CD4-positive, alpha-beta memory T cell (primary cell): ENCODE measurements at regions of chr3 and their contacts with region 1.

Region 1: DNA sequence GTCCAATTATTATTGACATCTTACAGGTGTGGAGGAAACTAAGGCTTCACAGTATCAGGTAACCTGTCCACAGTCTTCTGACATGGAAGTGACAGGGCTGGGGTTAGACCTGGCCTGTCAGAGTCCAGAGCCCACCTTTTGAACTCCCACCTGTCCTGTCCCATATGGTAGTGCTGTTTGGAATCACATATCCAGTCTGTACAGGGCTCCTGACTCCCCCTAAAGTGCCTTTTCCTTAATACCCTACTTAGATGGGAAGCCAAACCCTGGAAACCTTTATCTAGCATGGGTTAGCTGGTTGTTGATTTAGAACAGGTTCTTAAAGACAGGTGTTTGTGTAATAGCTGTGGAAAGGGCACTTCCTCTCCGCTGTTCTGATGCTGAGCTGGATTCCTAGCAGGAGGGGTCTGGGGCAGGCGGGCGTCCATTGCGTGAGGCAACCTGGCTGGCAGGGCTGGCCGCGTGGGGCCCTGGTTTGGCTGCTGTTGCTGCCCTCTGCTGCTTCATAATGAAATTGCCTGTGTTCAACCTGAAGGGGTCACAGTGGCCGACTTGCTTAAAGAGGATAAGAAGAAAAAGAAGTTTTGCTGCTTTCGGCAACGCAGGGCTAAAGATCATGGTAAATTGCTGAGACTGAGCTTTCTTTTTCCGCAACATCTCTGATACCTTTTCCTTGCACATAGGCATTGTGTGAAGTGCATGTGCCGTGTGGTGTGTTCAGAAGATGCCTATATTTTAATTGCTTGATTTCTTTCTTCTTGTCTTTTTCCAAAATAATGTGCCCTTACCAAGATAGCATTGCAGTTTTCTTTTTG is 136.2 kb downstream of the CHDH start:
- DNase-seq: peak; percentile 29 to 53 (median 41)
- H3K4me3 ChIP-seq: no peak overlapping the region
- H3K4me3 Mint-ChIP-seq: no peak overlapping the region
- H3K27ac ChIP-seq: no peak overlapping the region
- H3K27ac Mint-ChIP-seq: no peak overlapping the region
- H3K4me1 ChIP-seq: peaks cover 4% of the 10 kb centered on the region
- H3K4me1 Mint-ChIP-seq: peaks cover 0 to 5% (median under 1%) of the 10 kb centered on the region in 4 donors
- H3K27me3 ChIP-seq: no peaks in the 10 kb centered on the region
- H3K27me3 Mint-ChIP-seq: no peaks in the 10 kb centered on the region

Region 2: DNA sequence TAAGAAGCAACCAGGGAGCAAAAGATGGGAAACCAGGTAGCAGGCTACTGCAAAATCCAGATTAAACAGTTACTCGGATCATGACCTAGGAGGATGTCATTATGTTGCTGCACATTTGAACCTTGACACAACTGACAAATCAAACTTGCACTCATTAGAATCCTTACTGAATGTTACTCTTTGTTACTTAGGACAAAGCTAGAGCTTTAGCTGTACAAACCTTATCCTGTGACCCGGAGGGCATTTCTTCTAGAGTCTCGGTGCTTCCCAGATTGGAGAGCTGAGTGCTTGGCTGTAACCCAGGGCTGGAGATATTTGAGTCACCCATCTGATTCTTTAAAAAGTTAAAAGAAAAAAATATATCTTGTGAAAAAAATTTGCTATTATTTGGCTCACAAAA is 406.1 kb before region 1 on chr3:
- CTCF ChIA-PET with region 1: interaction called, 16 read pairs
- POLR2A ChIA-PET with region 1: no interaction called
- intact Hi-C with region 1: no loop called
- DNase-seq: no peak
- H3K4me3 ChIP-seq: no peak overlapping the region
- H3K4me3 Mint-ChIP-seq: no peak overlapping the region
- H3K27ac ChIP-seq: no peak overlapping the region
- H3K27ac Mint-ChIP-seq: peak overlapping the region in 3 of 7 donors; percentile 25 to 79 (median 53)
- H3K4me1 ChIP-seq: no peaks in the 10 kb centered on the region
- H3K4me1 Mint-ChIP-seq: peaks cover 0 to 4% (median 2%) of the 10 kb centered on the region in 4 donors
- H3K27me3 ChIP-seq: no peaks in the 10 kb centered on the region
- H3K27me3 Mint-ChIP-seq: no peaks in the 10 kb centered on the region

Region 3: DNA sequence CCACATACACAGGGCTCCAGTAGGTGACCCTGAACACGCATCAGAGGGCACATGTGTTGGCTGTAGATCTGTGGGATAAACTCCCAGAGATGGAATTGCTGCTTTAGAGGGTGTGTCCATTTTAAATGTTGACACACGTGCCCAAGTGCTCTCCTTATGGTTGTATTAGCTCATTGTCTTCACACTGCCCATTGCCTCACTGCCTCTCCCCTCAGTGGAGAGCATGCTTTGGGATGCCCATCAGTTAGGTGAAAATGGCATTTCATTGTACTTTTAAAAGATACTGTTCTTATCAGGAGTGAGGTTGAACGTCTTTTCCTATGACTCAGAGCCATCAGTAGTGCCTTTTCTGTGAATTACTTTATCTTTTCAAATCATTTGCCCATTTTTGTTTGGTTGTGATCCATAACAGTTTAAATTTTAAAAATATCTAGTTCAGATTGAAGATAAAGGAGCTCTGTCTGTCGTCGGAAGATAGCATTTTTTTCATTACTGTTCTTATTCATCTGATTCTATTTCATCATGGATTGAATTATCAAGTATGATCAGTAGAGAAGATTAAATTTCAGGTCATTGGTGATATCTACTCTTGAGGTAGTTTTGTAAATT is 15.4 kb after region 1 on chr3:
- CTCF ChIA-PET with region 1: interaction called, 13 read pairs
- POLR2A ChIA-PET with region 1: no interaction called
- intact Hi-C with region 1: no loop called
- DNase-seq: no peak
- H3K4me3 ChIP-seq: no peak overlapping the region
- H3K4me3 Mint-ChIP-seq: no peak overlapping the region
- H3K27ac ChIP-seq: no peak overlapping the region
- H3K27ac Mint-ChIP-seq: no peak overlapping the region
- H3K4me1 ChIP-seq: no peaks in the 10 kb centered on the region
- H3K4me1 Mint-ChIP-seq: no peaks in the 10 kb centered on the region
- H3K27me3 ChIP-seq: no peaks in the 10 kb centered on the region
- H3K27me3 Mint-ChIP-seq: peaks cover 9 to 23% of the 10 kb centered on the region in 2 donors

Region 4: DNA sequence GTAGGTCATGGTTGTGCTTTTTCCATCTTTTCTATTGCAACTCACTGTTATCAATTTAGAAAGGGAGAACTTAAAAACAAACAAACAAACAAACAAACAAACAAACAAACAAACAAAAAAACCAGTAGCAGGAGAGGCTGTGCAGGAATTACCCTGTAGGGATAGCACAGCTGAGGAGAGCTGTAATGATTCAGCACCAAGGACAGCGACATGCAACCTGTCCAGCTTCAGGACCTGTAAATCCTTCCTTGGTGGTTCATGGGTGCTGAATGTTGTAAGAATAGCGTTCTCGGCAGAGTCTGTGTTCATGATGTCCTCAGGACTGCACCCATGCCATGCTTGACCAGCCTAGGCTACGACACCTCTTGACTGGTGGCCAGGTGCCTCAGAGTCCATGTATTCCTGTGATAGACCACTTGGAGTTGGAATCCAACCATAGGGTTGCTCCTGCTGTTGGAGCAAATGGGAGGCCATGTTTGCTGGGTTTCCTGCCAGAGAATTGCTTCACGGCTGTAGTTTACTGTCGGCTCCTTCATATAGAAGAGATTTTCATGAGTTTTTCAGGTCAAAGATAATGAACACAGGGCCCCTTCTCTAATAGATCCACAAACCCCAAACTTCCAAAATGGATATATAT is 478.2 kb after region 1 on chr3:
- CTCF ChIA-PET with region 1: no interaction called
- POLR2A ChIA-PET with region 1: no interaction called
- intact Hi-C with region 1: no loop called
- DNase-seq: peak in 4 of 5 donors; percentile 10 to 18 (median 16)
- H3K4me3 ChIP-seq: no peak overlapping the region
- H3K4me3 Mint-ChIP-seq: no peak overlapping the region
- H3K27ac ChIP-seq: no peak overlapping the region
- H3K27ac Mint-ChIP-seq: no peak overlapping the region
- H3K4me1 ChIP-seq: no peaks in the 10 kb centered on the region
- H3K4me1 Mint-ChIP-seq: no peaks in the 10 kb centered on the region
- H3K27me3 ChIP-seq: no peaks in the 10 kb centered on the region
- H3K27me3 Mint-ChIP-seq: no peaks in the 10 kb centered on the region